ENCODE measurements at regions of chr11 and their contacts with region 1.

Region 1: DNA sequence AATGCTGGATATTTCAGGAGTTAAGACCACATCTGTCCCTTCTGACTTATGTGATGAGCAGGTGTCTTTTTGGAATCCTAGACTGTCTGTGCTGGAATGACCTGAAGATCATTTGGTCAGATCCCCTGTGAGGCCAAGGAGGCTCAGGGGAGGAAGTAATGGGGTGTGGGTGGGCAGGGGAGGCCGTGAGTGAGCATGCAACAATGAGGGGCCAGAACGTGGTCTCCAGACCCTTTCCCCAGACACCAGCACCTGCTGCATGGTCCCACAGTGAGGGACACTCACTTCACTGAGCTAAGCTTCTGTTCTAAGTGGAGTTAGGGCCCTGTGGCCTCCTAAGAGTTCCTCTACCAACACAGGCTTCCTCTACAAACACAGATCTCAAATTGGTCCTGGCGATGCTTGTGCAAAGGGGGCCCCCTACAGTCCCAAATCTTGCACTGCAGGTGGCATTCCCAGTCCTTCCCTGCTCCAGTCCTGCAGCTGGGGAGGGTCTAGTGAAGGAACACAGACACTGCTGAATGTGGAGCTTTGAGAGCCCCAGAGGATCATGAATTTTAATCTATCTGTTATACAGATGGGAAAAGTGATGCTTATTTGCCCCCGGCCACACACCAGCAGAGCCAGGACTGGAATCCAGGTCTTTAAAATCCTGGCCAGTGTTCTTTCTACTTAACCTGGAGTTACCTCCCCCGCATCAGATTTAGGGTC is 7.4 kb downstream of the USP2 start:
- DNase-seq: peak; percentile 63
- CTCF ChIP-seq: peak; percentile 84

Region 2: DNA sequence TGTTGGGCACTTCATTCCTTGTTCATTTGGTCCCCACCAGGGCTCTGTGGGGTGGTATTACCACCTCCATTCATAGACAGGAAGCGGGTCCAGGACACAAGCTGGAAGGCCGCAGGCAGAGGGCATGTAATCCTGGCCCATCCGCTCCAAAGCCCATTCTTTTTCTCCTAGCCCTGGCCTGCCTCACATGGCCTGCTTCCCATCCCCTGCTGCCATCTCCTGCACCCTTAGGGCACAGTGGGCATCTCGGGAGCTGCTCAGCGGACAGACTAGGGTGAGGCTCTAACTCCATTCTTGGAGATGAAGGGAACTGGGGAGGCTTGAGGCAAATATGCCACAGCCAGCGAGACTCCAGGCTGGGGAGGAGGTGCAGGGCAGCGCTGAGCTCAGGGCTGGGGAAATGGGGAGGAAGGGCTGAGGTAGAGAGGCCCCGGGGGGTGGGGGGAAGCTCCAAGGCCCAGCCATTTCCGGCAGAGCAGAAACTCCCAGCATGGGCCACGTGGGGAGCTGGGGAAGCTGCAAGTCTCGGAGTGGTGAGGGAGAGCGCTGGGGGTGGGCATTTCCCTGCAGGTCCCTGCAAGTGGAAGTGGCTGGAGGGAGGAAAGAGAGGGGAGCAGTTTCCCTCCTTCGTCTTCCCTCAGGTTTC is 434.0 kb before region 1 on chr11:
- CTCF ChIA-PET with region 1: no interaction called
- POLR2A ChIA-PET with region 1: no interaction called
- DNase-seq: peak; percentile 70
- CTCF ChIP-seq: no peak

Region 3: DNA sequence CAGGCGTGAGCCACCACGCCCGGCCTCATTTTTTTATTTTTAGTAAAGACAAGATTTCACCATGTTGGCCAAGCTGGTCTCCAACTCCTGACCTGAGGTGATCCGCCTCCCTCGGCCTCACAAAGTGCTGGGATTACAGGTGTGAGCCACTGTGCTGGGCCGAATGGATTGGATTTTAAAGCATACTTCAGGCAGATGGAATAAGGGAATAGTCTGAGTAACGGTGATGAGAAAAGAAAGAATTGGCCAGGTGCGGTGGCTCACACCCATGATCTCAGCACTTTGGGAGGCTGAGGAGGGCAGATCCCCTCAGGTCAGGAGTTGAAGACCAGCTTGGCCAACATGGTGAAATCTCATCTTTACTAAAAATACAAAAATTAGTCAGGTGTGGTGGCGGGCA is 170.0 kb before region 1 on chr11:
- CTCF ChIA-PET with region 1: no interaction called
- POLR2A ChIA-PET with region 1: no interaction called
- DNase-seq: no peak
- CTCF ChIP-seq: no peak

Region 4: GRCh38 chr11:119339589-119340343 is 34.3 kb before region 1 on chr11:
- CTCF ChIA-PET with region 1: interaction called, 19 read pairs
- POLR2A ChIA-PET with region 1: no interaction called
- DNase-seq: peak; percentile 82
- CTCF ChIP-seq: peak; percentile 84

Region 5: DNA sequence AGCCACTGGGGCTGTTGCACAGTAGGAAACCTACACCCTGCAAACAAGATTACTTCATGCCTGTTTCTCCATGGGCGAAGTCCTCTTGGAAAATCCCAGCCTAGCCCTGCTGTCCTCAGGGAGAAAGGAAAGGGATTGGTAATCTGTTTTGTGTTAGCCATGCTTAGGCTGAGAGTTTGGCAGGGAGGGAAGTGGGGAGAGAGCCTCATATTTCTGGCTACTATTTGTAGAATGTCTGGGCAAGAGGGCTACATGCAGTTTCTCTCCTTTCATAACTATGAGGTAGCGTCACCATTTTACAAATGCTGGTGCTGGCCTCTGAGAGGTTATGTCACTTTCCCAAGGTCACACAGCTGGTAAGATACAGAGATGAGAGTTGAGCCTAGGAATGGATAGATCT is 26.8 kb before region 1 on chr11:
- CTCF ChIA-PET with region 1: interaction called, 14 read pairs
- POLR2A ChIA-PET with region 1: no interaction called
- DNase-seq: no peak
- CTCF ChIP-seq: no peak

Region 6: GRCh38 chr11:119356349-119357031 is 17.6 kb before region 1 on chr11:
- CTCF ChIA-PET with region 1: interaction called, 159 read pairs
- POLR2A ChIA-PET with region 1: no interaction called
- DNase-seq: peak; percentile 87
- CTCF ChIP-seq: peak; percentile 97

Region 7: DNA sequence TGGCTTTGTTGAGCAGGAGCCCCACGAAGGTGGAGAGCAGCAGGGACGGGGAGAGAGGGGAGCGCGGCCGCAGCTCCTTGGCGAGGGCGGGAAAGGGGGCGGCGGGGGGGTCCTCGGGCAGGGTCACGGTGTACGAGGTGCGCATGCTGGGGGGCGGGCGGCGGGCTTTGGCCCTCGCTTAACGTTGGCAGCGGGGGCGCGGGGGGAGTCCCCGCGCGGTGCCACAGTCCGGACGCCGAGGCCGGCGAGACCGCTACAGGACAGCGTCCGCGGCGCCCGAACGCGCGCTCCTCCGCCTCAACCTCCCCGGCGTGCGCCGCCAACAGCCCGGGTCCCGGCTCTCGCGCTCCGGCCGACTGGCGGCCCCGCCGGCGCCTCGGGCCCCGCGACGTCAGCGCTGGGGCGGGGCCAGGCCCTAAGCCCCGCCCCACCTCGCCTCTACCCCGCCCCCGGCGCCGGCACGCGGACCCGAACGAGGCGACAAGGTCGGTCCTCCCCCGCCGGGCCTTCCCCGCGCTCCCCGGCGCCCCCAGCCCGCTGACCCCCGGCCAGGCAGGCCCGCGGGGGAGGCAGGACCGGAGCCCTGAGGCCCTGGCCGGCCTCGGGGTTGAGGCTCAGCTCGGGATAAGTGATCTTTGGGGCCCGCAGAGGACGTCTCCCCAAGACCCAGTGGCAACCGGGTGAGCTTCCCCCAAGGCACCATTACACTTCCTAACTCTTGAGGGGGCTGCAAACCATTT is 10.1 kb before region 1 on chr11:
- CTCF ChIA-PET with region 1: interaction called, 159 read pairs
- POLR2A ChIA-PET with region 1: no interaction called
- DNase-seq: peak; percentile 82
- CTCF ChIP-seq: no peak

Measured in GM10248 (cell line).